Heart right ventricle (tissue), 16 donors: ENCODE measurements at regions of chr11 and their contacts with region 1.

Region 1: GRCh38 chr11:8033305-8034105 is 46.4 kb downstream of the EIF3F start:
- DNase-seq: peak; percentile 78 to 87
- ATAC-seq: peak; percentile 58 to 89 (median 74)
- H3K4me3 ChIP-seq: peak overlapping the region in 2 of 10 donors; percentile 15 to 25
- H3K27ac ChIP-seq: peak overlapping the region in 1 of 10 donors; percentile 35
- H3K4me1 ChIP-seq: peaks cover 7 to 47% (median 24%) of the 10 kb centered on the region in 9 donors
- H3K27me3 ChIP-seq: peaks cover 0 to 11% (median 0%) of the 10 kb centered on the region in 7 donors
- CTCF ChIP-seq: peak; percentile 84 to 95 (median 93)

Region 2: GRCh38 chr11:8059571-8060011 is 26.1 kb after region 1 on chr11:
- intact Hi-C with region 1: no loop called
- DNase-seq: no peak
- ATAC-seq: peak in 1 of 8 donors; percentile 13
- H3K4me3 ChIP-seq: no peak overlapping the region
- H3K27ac ChIP-seq: no peak overlapping the region
- H3K4me1 ChIP-seq: peaks cover 17 to 67% (median 48%) of the 10 kb centered on the region in 9 donors
- H3K27me3 ChIP-seq: no peaks in the 10 kb centered on the region
- CTCF ChIP-seq: no peak

Region 3: DNA sequence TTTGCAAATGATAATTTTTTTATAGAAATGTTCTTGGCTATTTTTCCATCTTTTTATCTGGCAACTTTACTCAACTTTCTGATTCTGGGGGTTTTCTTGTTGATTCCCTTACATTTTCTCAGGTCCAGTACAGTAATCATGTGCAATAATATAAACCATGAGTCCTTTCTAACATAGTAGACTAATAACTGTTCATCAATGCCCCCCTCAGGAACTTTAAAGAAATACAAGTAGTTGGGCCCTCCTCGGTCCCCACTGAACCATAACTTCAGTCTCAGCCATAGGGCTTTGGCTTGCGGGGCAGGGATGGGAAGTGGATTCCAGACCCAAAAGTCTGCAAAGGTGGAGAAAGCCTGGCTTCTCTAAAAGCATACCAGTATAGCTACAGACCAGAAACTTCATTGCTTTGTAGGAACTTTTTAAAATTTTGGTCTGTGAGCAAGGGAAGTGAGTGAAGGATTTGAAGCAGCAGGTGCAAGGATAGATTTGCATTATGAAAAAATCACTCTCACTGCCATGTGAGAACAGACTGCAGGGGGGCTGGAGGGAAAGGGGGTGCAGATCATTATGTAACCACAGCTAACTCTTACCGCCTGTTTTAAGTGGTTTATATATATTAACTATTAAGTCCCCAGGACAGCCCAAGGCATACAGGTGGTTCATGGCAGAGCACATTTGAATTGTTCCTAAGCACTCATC is 37.1 kb after region 1 on chr11:
- intact Hi-C with region 1: loop called in 9 of 10 experiments (anchors 1 to 5 kb)
- DNase-seq: no peak
- ATAC-seq: peak in 5 of 8 donors; percentile 34 to 53 (median 45)
- H3K4me3 ChIP-seq: no peak overlapping the region
- H3K27ac ChIP-seq: no peak overlapping the region
- H3K4me1 ChIP-seq: peaks cover 13 to 47% (median 41%) of the 10 kb centered on the region in 9 donors
- H3K27me3 ChIP-seq: no peaks in the 10 kb centered on the region
- CTCF ChIP-seq: peak in 8 of 9 donors; percentile 16 to 60 (median 47)

Region 4: GRCh38 chr11:8087185-8087584 is 53.7 kb after region 1 on chr11:
- intact Hi-C with region 1: loop called in 8 of 10 experiments (anchors 2 to 10 kb)
- DNase-seq: no peak
- ATAC-seq: peak in 2 of 8 donors; percentile 16 to 25
- H3K4me3 ChIP-seq: no peak overlapping the region
- H3K27ac ChIP-seq: no peak overlapping the region
- H3K4me1 ChIP-seq: peaks cover 0 to 56% (median 45%) of the 10 kb centered on the region in 9 donors
- H3K27me3 ChIP-seq: no peaks in the 10 kb centered on the region
- CTCF ChIP-seq: peak in 6 of 9 donors; percentile 6 to 36 (median 19)

Region 5: DNA sequence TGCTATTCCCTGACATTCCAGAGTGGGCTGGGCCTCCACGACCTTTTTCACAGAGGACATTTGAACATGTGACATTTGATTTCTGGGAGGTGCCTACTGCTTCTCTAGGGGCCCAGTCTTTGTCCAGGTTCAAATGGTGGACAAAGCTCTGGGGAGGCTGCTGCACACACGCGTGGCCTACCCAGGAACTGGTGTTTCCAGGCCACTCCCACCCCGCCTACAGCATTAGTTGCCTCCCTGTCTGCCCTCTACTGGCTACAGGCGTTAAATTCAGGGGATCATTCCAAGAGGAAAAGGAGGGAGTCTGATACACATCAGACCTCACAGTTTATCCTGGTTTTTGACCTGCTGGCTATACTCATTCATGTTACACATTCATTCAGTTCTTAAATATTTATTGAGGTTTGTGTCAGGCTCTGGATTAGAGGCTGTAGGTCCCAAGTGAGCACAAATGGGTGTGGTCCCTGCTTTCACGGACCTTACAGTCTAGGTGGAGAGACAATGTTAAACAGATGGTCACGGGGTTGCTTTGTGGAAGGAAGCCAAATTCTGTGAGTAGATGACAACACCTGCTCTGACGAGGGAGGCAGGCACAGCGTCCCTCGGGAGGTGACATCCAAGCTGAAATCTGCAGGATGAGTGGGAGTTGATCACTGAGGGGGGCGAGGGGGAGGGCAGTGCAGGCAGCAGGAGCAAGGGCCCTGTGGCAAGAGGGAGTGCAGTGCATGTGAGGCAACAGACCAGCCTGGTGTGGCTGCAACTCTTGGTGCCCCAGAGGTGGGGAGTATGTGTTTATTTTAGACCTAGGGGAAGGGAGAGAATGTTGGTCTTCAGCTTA is 59.3 kb after region 1 on chr11:
- intact Hi-C with region 1: loop called in 9 of 10 experiments (anchors 2 to 10 kb)
- DNase-seq: peak; percentile 52 to 77
- ATAC-seq: peak; percentile 43 to 78 (median 65)
- H3K4me3 ChIP-seq: no peak overlapping the region
- H3K27ac ChIP-seq: no peak overlapping the region
- H3K4me1 ChIP-seq: peaks cover 0 to 17% (median 6%) of the 10 kb centered on the region in 9 donors
- H3K27me3 ChIP-seq: no peaks in the 10 kb centered on the region
- CTCF ChIP-seq: peak; percentile 40 to 78 (median 65)

Region 6: GRCh38 chr11:8099291-8099899 is 65.9 kb after region 1 on chr11:
- intact Hi-C with region 1: loop called in 5 of 10 experiments (anchors 1 to 10 kb)
- DNase-seq: peak; percentile 68 to 76
- ATAC-seq: peak in 7 of 8 donors; percentile 37 to 66 (median 63)
- H3K4me3 ChIP-seq: no peak overlapping the region
- H3K27ac ChIP-seq: no peak overlapping the region
- H3K4me1 ChIP-seq: no peaks in the 10 kb centered on the region
- H3K27me3 ChIP-seq: no peaks in the 10 kb centered on the region
- CTCF ChIP-seq: peak; percentile 60 to 89 (median 82)